Ascending aorta (tissue), 2 donors: ENCODE measurements at regions of chr1 and their contacts with region 1.

Region 1: DNA sequence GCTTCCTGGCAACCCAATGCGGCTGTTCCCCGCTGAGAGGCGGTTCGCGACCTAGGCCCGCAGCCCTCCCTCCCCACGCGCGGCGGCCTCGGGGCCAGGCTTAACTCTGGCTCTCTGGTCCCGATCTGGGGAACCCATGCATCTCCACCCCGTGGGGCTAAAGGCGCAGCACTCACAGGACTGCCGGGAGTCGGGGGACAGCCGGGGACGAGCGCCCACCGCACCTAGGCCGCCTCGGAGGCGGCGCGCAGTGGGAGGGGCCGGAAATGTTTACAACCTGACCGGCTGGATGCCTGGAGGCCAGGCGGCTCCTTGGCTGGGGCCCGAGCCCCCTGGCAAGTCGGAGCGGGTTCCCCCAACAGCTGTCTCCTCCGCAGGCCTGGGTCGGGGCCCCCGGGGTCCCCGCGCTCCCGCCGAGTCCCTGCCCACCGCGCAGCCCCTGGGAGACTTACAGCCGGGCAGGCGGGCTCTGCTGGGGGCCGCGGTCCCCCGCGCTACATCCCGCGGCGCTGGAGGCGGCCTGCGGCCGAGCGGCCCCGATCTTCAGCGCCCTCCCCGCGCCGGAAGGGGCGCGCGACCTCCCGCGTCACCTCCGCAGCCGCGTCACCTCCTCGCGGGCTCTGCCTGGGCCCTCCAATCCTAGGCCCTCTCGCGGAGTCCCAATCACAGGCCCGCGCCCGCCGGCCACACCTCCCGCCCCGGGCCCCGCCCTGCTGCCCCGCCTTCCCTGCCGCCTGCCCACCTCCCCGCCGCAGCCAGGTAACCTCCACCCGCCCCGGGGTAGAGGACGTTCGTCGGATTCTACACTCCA is at the start of gene ADIPOR1:
- DNase-seq: peak; percentile 59 to 94
- H3K4me3 ChIP-seq: peak within 1 kb of the TSS; percentile 80 to 94
- H3K27ac ChIP-seq: peak within 1 kb of the TSS; percentile 95 to 96
- H3K4me1 ChIP-seq: peaks cover 3 to 21% of the 10 kb centered on the region in 2 donors
- H3K27me3 ChIP-seq: no peaks in the 10 kb centered on the region
- CTCF ChIP-seq: peak in 2 of 3 experiments; percentile 17 to 29
- total RNA-seq, gene ADIPOR1: 67.9 TPM

Region 2: DNA sequence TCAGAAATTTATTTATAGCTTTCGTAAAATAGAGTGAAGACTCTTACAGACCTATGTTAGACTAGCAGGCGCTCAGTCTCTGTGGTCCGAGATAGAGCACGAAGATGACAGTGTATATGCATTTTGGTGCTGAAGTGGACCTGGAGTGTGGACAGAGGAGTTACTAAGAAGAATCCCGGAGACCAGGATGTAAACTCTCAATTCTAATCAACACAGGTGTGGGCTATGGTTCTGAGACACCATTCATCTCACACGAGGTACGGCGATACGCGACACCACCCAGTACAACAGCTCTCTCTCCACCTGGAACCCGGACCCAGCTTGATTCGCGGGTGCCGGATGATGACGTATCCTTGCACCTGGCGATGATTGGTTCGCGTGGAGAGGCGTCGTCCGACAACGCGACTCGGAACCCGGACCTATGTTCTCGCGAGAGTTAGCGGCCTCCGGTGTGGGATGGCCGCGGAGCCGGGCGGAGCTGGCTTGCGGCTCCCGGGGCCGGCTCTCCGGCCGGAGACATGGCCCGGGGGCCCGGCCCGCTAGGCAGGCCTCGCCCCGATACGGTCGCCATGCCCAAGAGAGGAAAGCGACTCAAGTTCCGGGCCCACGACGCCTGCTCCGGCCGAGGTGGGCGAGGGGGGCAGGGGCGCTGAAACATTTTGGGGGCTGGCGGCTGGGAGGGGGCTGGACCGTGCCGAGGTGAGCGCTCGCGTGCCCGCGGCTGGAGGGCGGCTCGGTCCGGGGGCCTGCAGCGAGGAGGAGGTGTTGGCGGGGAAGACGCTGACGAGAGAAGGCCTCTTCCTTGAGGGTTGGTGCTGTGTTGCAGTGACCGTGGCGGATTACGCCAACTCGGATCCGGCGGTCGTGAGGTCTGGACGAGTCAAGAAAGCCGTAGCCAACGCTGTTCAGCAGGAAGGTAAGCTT is 49.3 kb after region 1 on chr1 and contains the start of gene TMEM183A:
- intact Hi-C with region 1: loop called (anchors 2 kb)
- DNase-seq: peak; percentile 83 to 97
- H3K4me3 ChIP-seq: peak within 1 kb of the TSS; percentile 78 to 89
- H3K27ac ChIP-seq: peak within 1 kb of the TSS; percentile 79 to 95
- H3K4me1 ChIP-seq: peaks cover 6 to 14% of the 10 kb centered on the region in 2 donors
- H3K27me3 ChIP-seq: no peaks in the 10 kb centered on the region
- CTCF ChIP-seq: no peak
- total RNA-seq, gene TMEM183A: 44.6 TPM

Region 3: GRCh38 chr1:203229471-203230135 is 271.7 kb after region 1 on chr1 and contains the start of gene CHIT1:
- intact Hi-C with region 1: no loop called
- DNase-seq: no peak
- H3K4me3 ChIP-seq: no peak within 1 kb of the TSS
- H3K27ac ChIP-seq: no peak within 1 kb of the TSS
- H3K4me1 ChIP-seq: no peaks in the 10 kb centered on the region
- H3K27me3 ChIP-seq: peaks cover 5% of the 10 kb centered on the region
- CTCF ChIP-seq: no peak
- total RNA-seq, gene CHIT1: not detected